HCT116 (cell line): ENCODE measurements at regions of chr2 and their contacts with region 1.

Region 1: DNA sequence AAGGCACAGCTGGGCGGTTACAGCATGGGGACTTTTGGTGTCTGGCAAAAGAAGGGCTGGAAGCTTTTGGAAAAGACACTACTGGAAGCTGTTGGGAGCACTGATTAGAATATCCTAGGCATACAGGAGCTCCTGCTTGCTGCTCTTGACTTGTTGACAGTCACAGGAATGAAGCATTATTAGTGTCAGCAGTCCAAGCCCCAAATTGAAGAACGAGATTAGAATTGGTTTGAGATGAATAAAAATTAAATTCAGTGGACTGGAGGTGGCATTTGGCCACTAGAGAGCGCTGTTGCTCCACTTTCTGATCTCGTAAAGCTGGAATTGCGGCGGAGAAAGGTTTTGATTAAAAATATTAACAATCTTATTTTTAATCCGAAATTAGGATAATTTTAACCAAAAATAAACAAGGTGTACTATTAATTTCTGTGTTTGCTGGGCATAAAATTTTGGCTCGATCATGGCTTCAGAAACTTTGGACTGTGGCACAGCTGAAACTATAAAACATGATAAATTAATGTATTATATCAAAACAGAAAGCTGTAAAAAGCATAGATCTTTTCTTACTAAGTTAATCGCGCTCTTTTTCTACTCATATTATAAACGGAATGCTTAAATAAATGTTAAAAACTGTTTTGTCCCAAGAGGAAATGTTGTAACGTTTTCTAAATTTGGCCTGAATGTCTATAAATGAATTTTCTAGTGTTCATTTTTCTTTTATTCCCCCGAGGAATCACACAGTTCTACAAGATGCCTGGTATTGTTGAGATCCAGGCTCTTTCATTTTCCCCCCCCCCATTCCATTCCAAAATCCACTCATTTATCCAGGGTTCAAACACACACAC is 2.4 kb upstream of the HOXD8 start:
- DNase-seq: no peak
- ATAC-seq: no peak
- H3K4me3 ChIP-seq: peak overlapping the region; percentile 9; a peak in 2 of 4 replicates
- H3K27ac ChIP-seq: no peak overlapping the region
- H3K4me1 ChIP-seq: peaks cover 6 to 17% of the 10 kb centered on the region in 2 experiments; a peak in 3 of 4 replicates
- H3K27me3 ChIP-seq: no peaks in the 10 kb centered on the region
- CTCF ChIP-seq: peak; percentile 64 to 88 (median 87)
- POLR2A ChIP-seq: no peak
- RAD21 ChIP-seq: peak; percentile 93

Region 2: GRCh38 chr2:175726223-175726622 is 400.9 kb before region 1 on chr2:
- CTCF ChIA-PET with region 1: no interaction called
- POLR2A ChIA-PET with region 1: no interaction called
- RAD21 ChIA-PET with region 1: no interaction called
- intact Hi-C with region 1: no loop called
- DNase-seq: no peak
- ATAC-seq: no peak
- H3K4me3 ChIP-seq: no peak overlapping the region
- H3K27ac ChIP-seq: no peak overlapping the region
- H3K4me1 ChIP-seq: no peaks in the 10 kb centered on the region
- H3K27me3 ChIP-seq: no peaks in the 10 kb centered on the region
- CTCF ChIP-seq: no peak
- POLR2A ChIP-seq: no peak
- RAD21 ChIP-seq: no peak

Region 3: DNA sequence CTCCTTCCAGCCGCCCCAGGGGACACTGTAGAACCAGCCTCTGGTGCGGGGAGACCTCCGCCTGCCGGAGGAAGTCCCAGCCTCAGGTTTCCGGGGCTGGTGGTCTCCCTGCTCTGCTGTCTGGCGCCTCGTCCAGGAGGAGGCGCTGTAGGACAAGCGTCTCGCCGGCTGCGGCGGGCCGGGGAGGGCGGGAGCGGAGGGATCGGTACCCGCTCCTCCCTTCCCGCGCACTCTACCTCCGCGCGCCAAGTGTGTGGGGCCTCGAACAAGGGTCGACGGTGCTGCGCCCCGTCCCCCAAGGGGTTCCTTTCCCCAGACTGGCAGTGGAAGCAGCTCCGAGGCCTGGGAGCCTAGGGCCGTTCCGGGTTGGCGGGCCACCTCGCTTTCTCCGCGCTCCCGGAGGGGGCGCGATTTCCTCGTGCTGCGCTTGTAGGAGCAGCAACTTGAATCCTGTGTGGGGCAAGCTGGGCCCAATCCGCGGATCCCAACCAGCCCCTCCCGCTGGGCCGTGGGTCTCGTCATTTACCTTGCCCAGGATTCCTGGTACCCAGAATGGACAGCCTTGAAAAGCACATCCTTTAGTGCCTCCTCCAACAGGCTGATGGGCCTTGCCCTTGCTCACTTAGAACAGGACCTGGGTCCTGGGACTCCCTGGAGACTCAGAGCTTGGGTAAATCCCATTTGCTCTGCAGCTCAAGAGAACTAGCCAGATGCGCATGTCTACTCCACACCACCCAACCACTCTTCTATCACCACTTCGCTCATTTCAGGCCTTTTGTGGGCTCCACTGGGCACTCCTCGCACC is 13.6 kb after region 1 on chr2:
- CTCF ChIA-PET with region 1: interaction called, 19 read pairs
- POLR2A ChIA-PET with region 1: no interaction called
- RAD21 ChIA-PET with region 1: no interaction called
- intact Hi-C with region 1: no loop called
- DNase-seq: peak; percentile 48
- ATAC-seq: peak; percentile 90
- H3K4me3 ChIP-seq: peak overlapping the region; percentile 25 to 40
- H3K27ac ChIP-seq: no peak overlapping the region; the same call in 1 of the 2 replicates
- H3K4me1 ChIP-seq: peaks cover 2 to 18% of the 10 kb centered on the region in 2 experiments; a peak in 3 of 4 replicates
- H3K27me3 ChIP-seq: no peaks in the 10 kb centered on the region
- CTCF ChIP-seq: peak; percentile 83 to 97 (median 86)
- POLR2A ChIP-seq: no peak
- RAD21 ChIP-seq: peak; percentile 98

Region 4: GRCh38 chr2:176554101-176555048 is 427.2 kb after region 1 on chr2:
- CTCF ChIA-PET with region 1: interaction called, 19 read pairs
- POLR2A ChIA-PET with region 1: interaction called, 5 read pairs
- RAD21 ChIA-PET with region 1: interaction called in 1 of 2 experiments, 7 read pairs
- intact Hi-C with region 1: no loop called
- DNase-seq: peak; percentile 43
- ATAC-seq: peak; percentile 49
- H3K4me3 ChIP-seq: peak overlapping the region; percentile 39 to 58
- H3K27ac ChIP-seq: no peak overlapping the region; the same call in 1 of the 2 replicates
- H3K4me1 ChIP-seq: peaks cover 0 to 25% of the 10 kb centered on the region in 2 experiments; a peak in 2 of 4 replicates
- H3K27me3 ChIP-seq: 0 out of 2 replicates have a peak, but pooled peaks cover 7% of the 10 kb centered on the region
- CTCF ChIP-seq: peak; percentile 57 to 81 (median 69)
- POLR2A ChIP-seq: no peak
- RAD21 ChIP-seq: peak; percentile 78

Region 5: GRCh38 chr2:176814306-176815052 is 687.3 kb after region 1 on chr2:
- CTCF ChIA-PET with region 1: interaction called, 14 read pairs
- POLR2A ChIA-PET with region 1: no interaction called
- RAD21 ChIA-PET with region 1: no interaction called
- intact Hi-C with region 1: loop called (anchors 2 kb)
- DNase-seq: peak; percentile 12
- ATAC-seq: peak; percentile 69
- H3K4me3 ChIP-seq: no peak overlapping the region
- H3K27ac ChIP-seq: no peak overlapping the region
- H3K4me1 ChIP-seq: no peaks in the 10 kb centered on the region
- H3K27me3 ChIP-seq: 0 out of 2 replicates have a peak, but pooled peaks cover 9% of the 10 kb centered on the region
- CTCF ChIP-seq: peak; percentile 25 to 61 (median 40); a peak in 3 of 6 replicates
- POLR2A ChIP-seq: no peak
- RAD21 ChIP-seq: peak; percentile 70

Region 6: DNA sequence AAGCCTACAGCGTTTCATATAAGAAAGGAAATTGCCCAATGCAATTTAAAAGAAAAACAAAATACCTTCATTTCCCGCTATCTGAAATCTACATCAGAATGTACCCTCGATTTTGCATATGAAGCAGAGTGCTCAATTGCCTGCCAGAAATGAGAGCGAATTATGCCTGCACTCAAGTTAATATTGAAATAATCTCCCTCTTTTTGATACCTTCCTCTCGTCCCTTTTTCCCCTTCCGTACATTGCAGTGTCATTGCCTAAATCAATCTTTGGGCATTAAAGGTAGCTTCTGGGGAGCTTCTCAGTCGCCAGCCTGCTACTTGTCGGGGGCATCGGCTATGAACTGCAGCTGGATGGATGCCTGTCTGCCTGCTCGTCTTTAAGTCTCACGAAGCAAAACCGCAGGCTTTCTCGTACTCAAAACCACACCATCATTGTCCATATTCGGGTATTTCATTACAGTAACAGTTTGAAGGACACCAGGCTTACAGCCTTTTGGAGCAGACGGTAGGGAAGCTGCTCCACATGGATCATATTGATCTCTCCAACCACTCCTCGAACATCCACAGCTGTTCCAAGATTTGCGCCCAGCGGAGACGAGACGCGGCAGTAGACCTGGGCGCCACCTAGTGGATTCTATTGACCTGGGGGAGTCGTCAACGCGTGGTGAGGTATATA is 1021.5 kb after region 1 on chr2:
- CTCF ChIA-PET with region 1: interaction called, 35 read pairs
- POLR2A ChIA-PET with region 1: interaction called, 3 read pairs
- RAD21 ChIA-PET with region 1: interaction called, 3 read pairs
- intact Hi-C with region 1: loop called (anchors 1 kb)
- DNase-seq: peak; percentile 68
- ATAC-seq: peak; percentile 99
- H3K4me3 ChIP-seq: peak overlapping the region; percentile 25 to 51
- H3K27ac ChIP-seq: no peak overlapping the region
- H3K4me1 ChIP-seq: peaks cover 0 to 8% of the 10 kb centered on the region in 2 experiments; a peak in 2 of 4 replicates
- H3K27me3 ChIP-seq: no peaks in the 10 kb centered on the region
- CTCF ChIP-seq: peak; percentile 82 to 94 (median 90); a peak in 5 of 6 replicates
- POLR2A ChIP-seq: no peak
- RAD21 ChIP-seq: peak; percentile 79